ENCODE measurements at regions of chr1 and their contacts with region 1.

Region 1: GRCh38 chr1:22451702-22452474 is at the start of gene ZBTB40:
- DNase-seq: peak; percentile 99
- ATAC-seq: peak; percentile 98
- total RNA-seq, gene ZBTB40: 17.9 TPM

Region 2: GRCh38 chr1:22488319-22488718 is 36.4 kb after region 1 on chr1:
- intact Hi-C with region 1: loop called (anchors 5 kb)
- DNase-seq: no peak
- ATAC-seq: no peak

Region 3: GRCh38 chr1:22500471-22500870 is 48.6 kb after region 1 on chr1:
- intact Hi-C with region 1: loop called (anchors 5 kb)
- DNase-seq: no peak
- ATAC-seq: no peak

Region 4: DNA sequence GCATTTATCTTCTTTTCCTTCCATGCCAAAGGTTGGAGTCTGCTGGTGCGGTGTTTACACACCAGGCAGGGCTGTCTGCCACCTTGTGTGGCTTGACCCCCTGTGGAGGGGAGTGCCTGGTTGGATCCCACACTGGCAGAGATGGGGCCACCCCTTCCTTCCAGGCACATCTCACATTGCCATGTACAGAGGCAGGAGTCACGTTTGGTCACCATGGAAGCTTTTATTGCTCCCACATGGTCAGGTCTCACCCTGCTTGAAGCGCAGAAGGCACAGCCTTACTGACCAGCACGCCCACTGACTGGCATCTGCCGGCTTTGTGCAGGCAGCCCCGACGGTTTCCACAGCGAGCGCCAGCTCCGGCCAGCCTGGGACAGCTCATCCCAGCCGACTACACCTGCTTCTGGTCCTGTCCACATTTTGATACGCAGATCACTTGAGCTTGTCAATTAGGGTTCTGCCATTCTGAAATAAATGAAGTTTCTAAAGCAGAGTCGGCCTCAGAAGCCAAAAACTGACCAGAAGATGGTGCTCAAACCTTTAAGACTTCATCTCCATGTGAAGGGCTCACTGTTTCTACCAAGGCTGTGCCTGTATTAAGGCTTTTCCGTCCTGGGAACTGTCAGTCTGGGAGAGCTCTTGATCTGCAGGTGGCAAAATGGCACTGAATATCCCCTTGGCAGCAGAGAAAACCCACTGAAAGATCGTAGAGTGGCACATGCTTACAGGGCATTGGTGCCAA is 75.8 kb after region 1 on chr1:
- intact Hi-C with region 1: no loop called
- DNase-seq: no peak
- ATAC-seq: no peak

Region 5: GRCh38 chr1:22557341-22557950 is 105.6 kb after region 1 on chr1:
- intact Hi-C with region 1: no loop called
- DNase-seq: peak; percentile 27
- ATAC-seq: no peak

Region 6: DNA sequence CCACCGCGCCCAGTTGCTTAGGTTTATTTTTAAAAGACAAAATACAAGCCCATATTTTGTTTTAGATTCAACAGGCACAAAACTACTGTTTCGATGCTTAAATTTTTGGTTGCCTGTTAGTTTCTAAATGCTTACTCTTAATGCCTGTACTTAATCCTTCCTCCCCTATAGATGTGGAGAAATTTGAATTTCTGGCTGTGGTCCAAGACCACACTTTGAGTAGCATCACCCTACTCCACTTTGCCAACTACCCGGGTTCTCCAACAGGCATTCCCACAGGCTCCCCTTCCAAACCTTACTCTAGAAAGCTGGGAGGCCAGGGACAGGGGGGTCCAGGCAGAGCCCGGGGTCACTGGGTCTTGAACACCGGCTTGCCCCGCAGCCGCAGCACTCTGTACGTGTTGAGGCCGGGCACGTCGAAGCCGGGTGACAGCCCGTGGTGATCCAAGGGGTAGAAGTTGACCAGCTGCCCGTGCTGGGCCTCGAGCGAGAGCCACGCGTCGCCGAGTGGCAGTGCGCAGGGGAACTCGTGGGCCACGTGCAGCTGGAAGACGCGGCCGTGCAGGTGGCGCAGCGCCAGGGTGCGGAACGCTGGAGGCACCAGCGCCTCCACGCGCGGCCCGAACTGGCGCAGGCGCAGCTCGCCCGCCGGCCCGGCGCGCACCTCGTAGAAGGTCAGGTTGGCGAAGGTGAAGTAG is 501.0 kb after region 1 on chr1:
- intact Hi-C with region 1: no loop called
- DNase-seq: no peak
- ATAC-seq: no peak